PC-9 (cell line): ENCODE measurements at regions of chr6 and their contacts with region 1.

Region 1: GRCh38 chr6:104281370-104281769 is 578.3 kb downstream of the HACE1 start:
- DNase-seq: no peak
- H3K4me3 ChIP-seq: no peak overlapping the region
- H3K27ac ChIP-seq: no peak overlapping the region
- H3K4me1 ChIP-seq: no peaks in the 10 kb centered on the region
- H3K27me3 ChIP-seq: no peaks in the 10 kb centered on the region
- CTCF ChIP-seq: no peak

Region 2: GRCh38 chr6:104143757-104144156 is 137.6 kb before region 1 on chr6:
- CTCF ChIA-PET with region 1: no interaction called
- POLR2A ChIA-PET with region 1: no interaction called
- intact Hi-C with region 1: no loop called
- DNase-seq: no peak
- H3K4me3 ChIP-seq: no peak overlapping the region
- H3K27ac ChIP-seq: no peak overlapping the region
- H3K4me1 ChIP-seq: no peaks in the 10 kb centered on the region
- H3K27me3 ChIP-seq: no peaks in the 10 kb centered on the region
- CTCF ChIP-seq: no peak

Region 3: GRCh38 chr6:104239971-104240370 is 41.4 kb before region 1 on chr6:
- CTCF ChIA-PET with region 1: no interaction called
- POLR2A ChIA-PET with region 1: no interaction called
- intact Hi-C with region 1: no loop called
- DNase-seq: no peak
- H3K4me3 ChIP-seq: no peak overlapping the region
- H3K27ac ChIP-seq: no peak overlapping the region
- H3K4me1 ChIP-seq: no peaks in the 10 kb centered on the region
- H3K27me3 ChIP-seq: no peaks in the 10 kb centered on the region
- CTCF ChIP-seq: no peak

Region 4: GRCh38 chr6:104573350-104573749 is 292.0 kb after region 1 on chr6:
- CTCF ChIA-PET with region 1: no interaction called
- POLR2A ChIA-PET with region 1: interaction called, 10 read pairs
- intact Hi-C with region 1: no loop called
- DNase-seq: no peak
- H3K4me3 ChIP-seq: no peak overlapping the region
- H3K27ac ChIP-seq: no peak overlapping the region
- H3K4me1 ChIP-seq: no peaks in the 10 kb centered on the region
- H3K27me3 ChIP-seq: no peaks in the 10 kb centered on the region
- CTCF ChIP-seq: no peak